IMR-90 (cell line): ENCODE measurements at regions of chr3 and their contacts with region 1.

Region 1: GRCh38 chr3:147141516-147142288 is 264.6 kb downstream of the ZIC4 start:
- DNase-seq: peak; percentile 11
- ATAC-seq: no peak
- H3K4me3 ChIP-seq: no peak overlapping the region
- H3K27ac ChIP-seq: no peak overlapping the region
- H3K4me1 ChIP-seq: no peaks in the 10 kb centered on the region
- H3K27me3 ChIP-seq: no peaks in the 10 kb centered on the region
- CTCF ChIP-seq: no peak
- POLR2A ChIP-seq: no peak
- RAD21 ChIP-seq: no peak

Region 2: GRCh38 chr3:147157631-147158030 is 15.9 kb after region 1 on chr3:
- CTCF ChIA-PET with region 1: no interaction called
- POLR2A ChIA-PET with region 1: no interaction called
- dilution Hi-C with region 1: no loop called
- in situ Hi-C with region 1: no loop called
- intact Hi-C with region 1: loop called (anchors 2 kb)
- DNase-seq: no peak
- ATAC-seq: no peak
- H3K4me3 ChIP-seq: no peak overlapping the region
- H3K27ac ChIP-seq: no peak overlapping the region
- H3K4me1 ChIP-seq: no peaks in the 10 kb centered on the region
- H3K27me3 ChIP-seq: no peaks in the 10 kb centered on the region
- CTCF ChIP-seq: no peak
- POLR2A ChIP-seq: no peak
- RAD21 ChIP-seq: no peak